Left colon (tissue), 2 donors: ENCODE measurements at regions of chr17 and their contacts with region 1.

Region 1: DNA sequence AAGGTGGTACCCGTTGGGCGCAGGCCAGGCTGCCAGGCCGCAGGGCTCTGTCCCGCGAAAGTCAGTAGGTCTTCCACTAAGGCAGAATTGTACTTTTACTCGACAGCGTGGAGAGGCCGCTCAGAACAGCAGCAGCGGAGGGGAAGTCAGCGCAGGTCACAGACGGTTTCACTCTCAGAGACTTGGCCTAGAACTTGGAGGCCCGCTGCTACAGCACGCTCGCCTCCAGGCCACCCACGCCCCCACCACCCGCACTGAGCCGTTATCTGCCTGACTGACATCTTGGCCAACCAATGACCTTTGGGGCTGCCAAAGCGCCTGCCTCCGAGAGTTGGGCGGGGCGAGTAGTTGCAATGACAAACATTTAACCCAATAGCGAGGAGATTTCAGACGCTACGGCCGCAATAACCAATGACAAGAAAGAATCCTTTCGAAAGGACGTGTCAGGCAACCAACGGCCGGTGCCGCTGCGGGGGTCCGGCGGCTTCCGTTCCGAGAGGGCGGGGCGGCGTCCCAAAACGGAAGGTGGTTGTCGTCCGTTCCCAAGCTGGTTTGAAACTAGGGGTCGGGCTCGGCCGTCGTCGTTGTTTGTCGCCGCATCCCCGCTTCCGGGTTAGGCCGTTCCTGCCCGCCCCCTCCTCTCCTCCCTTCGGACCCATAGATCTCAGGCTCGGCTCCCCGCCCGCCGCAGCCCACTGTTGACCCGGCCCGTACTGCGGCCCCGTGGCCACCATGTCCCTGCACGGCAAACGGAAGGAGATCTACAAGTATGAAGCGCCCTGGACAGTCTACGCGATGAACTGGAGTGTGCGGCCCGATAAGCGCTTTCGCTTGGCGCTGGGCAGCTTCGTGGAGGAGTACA is at the start of gene DCAF7:
- DNase-seq: peak; percentile 99 to 100
- ATAC-seq: peak; percentile 93
- total RNA-seq, gene DCAF7: 74.0 to 91.2 TPM

Region 2: DNA sequence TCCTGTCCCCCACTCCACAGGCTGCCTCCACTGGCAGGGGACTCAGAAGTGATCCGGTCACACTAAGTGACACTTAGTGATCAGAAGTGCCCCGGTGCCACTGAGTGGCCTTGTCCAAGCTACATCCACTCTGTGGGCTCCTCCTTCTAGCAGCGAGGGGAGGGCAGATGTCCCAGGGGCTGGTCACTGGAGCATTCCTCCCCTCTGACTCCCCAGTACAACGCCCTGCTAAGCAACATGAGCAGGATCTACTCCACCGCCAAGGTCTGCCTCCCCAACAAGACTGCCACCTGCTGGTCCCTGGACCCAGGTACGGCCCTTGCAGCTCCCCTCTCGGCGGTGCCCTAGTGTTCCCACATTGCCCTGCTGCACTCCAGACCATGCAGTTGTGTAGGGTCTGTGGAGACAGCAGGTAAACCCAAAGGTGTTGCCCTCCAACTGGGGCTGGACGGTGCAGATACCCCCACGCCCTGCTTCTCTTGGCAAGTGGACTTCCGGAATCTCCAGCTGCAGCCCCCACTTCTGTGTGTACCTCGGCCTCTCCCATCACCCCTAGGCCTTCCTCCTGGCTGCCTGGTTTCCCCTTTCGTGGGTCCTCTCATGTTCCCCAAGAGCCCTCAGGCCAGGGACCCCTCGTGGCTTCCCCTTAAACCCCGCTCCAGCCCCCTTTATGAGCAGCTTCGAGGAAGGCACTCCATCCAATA is 71.2 kb before region 1 on chr17:
- intact Hi-C with region 1: loop called in 1 of 2 experiments (anchors 5 kb)
- DNase-seq: peak; percentile 85 to 89
- ATAC-seq: peak; percentile 75

Region 3: GRCh38 chr17:63516910-63517824 is 33.0 kb before region 1 on chr17:
- intact Hi-C with region 1: no loop called
- DNase-seq: no peak
- ATAC-seq: no peak

Region 4: GRCh38 chr17:63675607-63676413 is 125.6 kb after region 1 on chr17:
- intact Hi-C with region 1: no loop called
- DNase-seq: peak; percentile 89 to 90
- ATAC-seq: peak; percentile 94